ENCODE measurements at regions of chr3 and their contacts with region 1.

Region 1: GRCh38 chr3:9946112-9947024 is 5.8 kb downstream of the PRRT3 start:
- DNase-seq: peak; percentile 89 to 95
- ATAC-seq: peak; percentile 77 to 91
- H3K4me3 ChIP-seq: peak overlapping the region; percentile 80
- H3K27ac ChIP-seq: peak overlapping the region; percentile 95 to 98
- H3K4me1 ChIP-seq: peaks cover 10% of the 10 kb centered on the region; the same call in 1 of the 3 replicates
- CTCF ChIP-seq: peak; percentile 79
- EP300 ChIP-seq: no peak
- POLR2A ChIP-seq: peak; percentile 70
- RAD21 ChIP-seq: peak; percentile 72 to 73; a peak in 4 of 5 replicates

Region 2: DNA sequence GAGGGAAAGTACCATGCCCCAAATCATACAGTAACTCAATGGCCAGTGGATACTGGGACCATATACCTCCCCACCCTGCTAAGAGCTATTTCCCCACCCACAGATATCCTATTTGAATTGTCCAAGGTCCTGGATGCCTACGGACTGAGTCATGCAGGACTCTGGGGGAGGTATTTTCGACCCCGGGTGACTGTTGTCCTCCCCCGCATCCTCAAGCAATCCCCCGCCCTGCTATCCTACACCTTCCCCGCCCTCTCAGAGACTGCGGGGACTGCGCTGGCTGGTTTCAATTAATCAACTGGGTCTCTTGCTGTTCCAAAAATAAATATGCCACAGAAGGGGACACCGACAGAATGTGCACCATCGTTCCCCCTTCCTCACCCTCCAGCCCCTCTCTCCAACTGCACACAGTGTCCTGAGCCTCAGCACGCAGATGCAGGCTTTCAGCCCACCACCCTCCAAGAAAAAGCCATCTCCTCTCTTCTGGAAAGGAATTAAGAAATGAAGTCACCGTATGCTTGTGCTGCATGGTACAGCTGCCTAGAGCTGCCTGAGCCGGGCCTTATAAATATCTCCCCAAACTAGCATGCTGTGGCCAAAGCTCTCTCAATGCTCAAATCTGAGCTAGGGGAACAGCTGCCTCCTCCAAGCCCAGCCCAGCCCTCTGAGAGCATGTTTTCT is 1204.6 kb before region 1 on chr3:
- CTCF ChIA-PET with region 1: no interaction called
- POLR2A ChIA-PET with region 1: no interaction called
- DNase-seq: peak; percentile 84 to 86
- ATAC-seq: peak; percentile 59 to 85
- H3K4me3 ChIP-seq: peak overlapping the region; percentile 30; the same call in 2 of the 3 replicates
- H3K27ac ChIP-seq: peak overlapping the region; percentile 80 to 81
- H3K4me1 ChIP-seq: peaks cover 50% of the 10 kb centered on the region
- CTCF ChIP-seq: no peak
- EP300 ChIP-seq: peak; percentile 40 to 62; a peak in 2 of 5 replicates
- POLR2A ChIP-seq: no peak
- RAD21 ChIP-seq: peak; percentile 8 to 17; a peak in 2 of 5 replicates

Region 3: GRCh38 chr3:9826815-9827567 is 119.4 kb before region 1 on chr3:
- CTCF ChIA-PET with region 1: interaction called, 30 read pairs
- POLR2A ChIA-PET with region 1: interaction called, 4 read pairs
- DNase-seq: peak; percentile 44 to 69
- ATAC-seq: peak; percentile 87 to 93
- H3K4me3 ChIP-seq: no peak overlapping the region
- H3K27ac ChIP-seq: no peak overlapping the region
- H3K4me1 ChIP-seq: no peaks in the 10 kb centered on the region
- CTCF ChIP-seq: peak; percentile 46
- EP300 ChIP-seq: no peak
- POLR2A ChIP-seq: no peak
- RAD21 ChIP-seq: peak; percentile 52 to 67

Region 4: GRCh38 chr3:9855594-9855993 is 90.8 kb before region 1 on chr3:
- CTCF ChIA-PET with region 1: interaction called, 19 read pairs
- POLR2A ChIA-PET with region 1: no interaction called
- DNase-seq: no peak
- ATAC-seq: no peak
- H3K4me3 ChIP-seq: no peak overlapping the region
- H3K27ac ChIP-seq: no peak overlapping the region
- H3K4me1 ChIP-seq: no peaks in the 10 kb centered on the region
- CTCF ChIP-seq: no peak
- EP300 ChIP-seq: no peak
- POLR2A ChIP-seq: no peak
- RAD21 ChIP-seq: no peak

Region 5: GRCh38 chr3:9890249-9891071 is 55.9 kb before region 1 on chr3 and contains the start of gene JAGN1:
- CTCF ChIA-PET with region 1: interaction called, 20 read pairs
- POLR2A ChIA-PET with region 1: interaction called, 14 read pairs
- DNase-seq: peak; percentile 87 to 93
- ATAC-seq: peak; percentile 78 to 89
- H3K4me3 ChIP-seq: peak within 1 kb of the TSS; percentile 81
- H3K27ac ChIP-seq: peak within 1 kb of the TSS; percentile 94 to 98
- H3K4me1 ChIP-seq: peaks cover 46% of the 10 kb centered on the region
- CTCF ChIP-seq: no peak
- EP300 ChIP-seq: no peak
- POLR2A ChIP-seq: peak; percentile 85
- RAD21 ChIP-seq: peak in 1 of 2 experiments; percentile 12; a peak in 1 of 5 replicates
- polyA plus RNA-seq, gene JAGN1: 63.2 and 79.3 TPM in 2 replicates

Region 6: DNA sequence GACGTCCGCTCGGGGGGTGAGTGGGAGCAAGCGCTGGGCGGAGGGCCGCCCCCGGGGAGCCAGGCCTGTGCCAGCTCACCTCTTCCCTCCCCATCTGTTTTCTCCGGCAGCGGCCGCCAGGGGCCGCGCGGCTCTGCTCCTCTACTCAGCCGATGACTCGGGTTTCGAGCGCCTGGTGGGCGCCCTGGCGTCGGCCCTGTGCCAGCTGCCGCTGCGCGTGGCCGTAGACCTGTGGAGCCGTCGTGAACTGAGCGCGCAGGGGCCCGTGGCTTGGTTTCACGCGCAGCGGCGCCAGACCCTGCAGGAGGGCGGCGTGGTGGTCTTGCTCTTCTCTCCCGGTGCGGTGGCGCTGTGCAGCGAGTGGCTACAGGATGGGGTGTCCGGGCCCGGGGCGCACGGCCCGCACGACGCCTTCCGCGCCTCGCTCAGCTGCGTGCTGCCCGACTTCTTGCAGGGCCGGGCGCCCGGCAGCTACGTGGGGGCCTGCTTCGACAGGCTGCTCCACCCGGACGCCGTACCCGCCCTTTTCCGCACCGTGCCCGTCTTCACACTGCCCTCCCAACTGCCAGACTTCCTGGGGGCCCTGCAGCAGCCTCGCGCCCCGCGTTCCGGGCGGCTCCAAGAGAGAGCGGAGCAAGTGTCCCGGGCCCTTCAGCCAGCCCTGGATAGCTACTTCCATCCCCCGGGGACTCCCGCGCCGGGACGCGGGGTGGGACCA is 13.4 kb before region 1 on chr3:
- CTCF ChIA-PET with region 1: interaction called, 146 read pairs
- POLR2A ChIA-PET with region 1: interaction called, 53 read pairs
- DNase-seq: peak; percentile 74 to 76
- ATAC-seq: peak; percentile 77 to 89
- H3K4me3 ChIP-seq: peak overlapping the region; percentile 73
- H3K27ac ChIP-seq: peak overlapping the region; percentile 85 to 93
- H3K4me1 ChIP-seq: peaks cover 17% of the 10 kb centered on the region
- CTCF ChIP-seq: peak; percentile 78
- EP300 ChIP-seq: no peak
- POLR2A ChIP-seq: 0 out of 2 replicates have a peak, but pooled peaks have one; percentile 27
- RAD21 ChIP-seq: peak; percentile 59 to 67; a peak in 4 of 5 replicates

Region 7: GRCh38 chr3:9976721-9977709 is 30.6 kb after region 1 on chr3:
- CTCF ChIA-PET with region 1: interaction called, 34 read pairs
- POLR2A ChIA-PET with region 1: interaction called, 9 read pairs
- DNase-seq: peak; percentile 63 to 93
- ATAC-seq: peak; percentile 95 to 97
- H3K4me3 ChIP-seq: peak overlapping the region; percentile 11; the same call in 2 of the 3 replicates
- H3K27ac ChIP-seq: peak overlapping the region; percentile 79 to 83
- H3K4me1 ChIP-seq: peaks cover 35% of the 10 kb centered on the region
- CTCF ChIP-seq: no peak
- EP300 ChIP-seq: peak in 1 of 2 experiments; percentile 59; a peak in 1 of 5 replicates
- POLR2A ChIP-seq: no peak
- RAD21 ChIP-seq: no peak

Region 8: GRCh38 chr3:10594921-10595320 is 648.6 kb after region 1 on chr3:
- CTCF ChIA-PET with region 1: no interaction called
- POLR2A ChIA-PET with region 1: no interaction called
- DNase-seq: peak; percentile 54 to 56
- ATAC-seq: peak; percentile 69 to 94; a peak in 4 of 6 replicates
- H3K4me3 ChIP-seq: no peak overlapping the region
- H3K27ac ChIP-seq: no peak overlapping the region
- H3K4me1 ChIP-seq: no peaks in the 10 kb centered on the region
- CTCF ChIP-seq: no peak
- EP300 ChIP-seq: no peak
- POLR2A ChIP-seq: no peak
- RAD21 ChIP-seq: no peak

Measured in A549 (cell line).